ENCODE measurements at regions of chr14 and their contacts with region 1.

Region 1: GRCh38 chr14:94036313-94037050 is 10.3 kb downstream of the OTUB2 start:
- DNase-seq: peak; percentile 63 to 73 (median 69)
- H3K4me3 ChIP-seq: no peak overlapping the region
- H3K4me3 Mint-ChIP-seq: peak overlapping the region in 1 of 8 donors; percentile 16
- H3K27ac ChIP-seq: no peak overlapping the region
- H3K27ac Mint-ChIP-seq: peak overlapping the region in 1 of 7 donors; percentile 47
- H3K4me1 ChIP-seq: no peaks in the 10 kb centered on the region
- H3K4me1 Mint-ChIP-seq: peaks cover 5 to 7% (median 6%) of the 10 kb centered on the region in 4 donors
- H3K27me3 ChIP-seq: no peaks in the 10 kb centered on the region
- H3K27me3 Mint-ChIP-seq: no peaks in the 10 kb centered on the region

Region 2: GRCh38 chr14:92224358-92224954 is 1812.0 kb before region 1 on chr14:
- CTCF ChIA-PET with region 1: no interaction called
- POLR2A ChIA-PET with region 1: no interaction called
- intact Hi-C with region 1: no loop called
- DNase-seq: no peak
- H3K4me3 ChIP-seq: no peak overlapping the region
- H3K4me3 Mint-ChIP-seq: no peak overlapping the region
- H3K27ac ChIP-seq: no peak overlapping the region
- H3K27ac Mint-ChIP-seq: no peak overlapping the region
- H3K4me1 ChIP-seq: no peaks in the 10 kb centered on the region
- H3K4me1 Mint-ChIP-seq: peaks cover 0 to 2% (median 0%) of the 10 kb centered on the region in 4 donors
- H3K27me3 ChIP-seq: no peaks in the 10 kb centered on the region
- H3K27me3 Mint-ChIP-seq: peaks cover 1 to 3% of the 10 kb centered on the region in 2 donors

Region 3: GRCh38 chr14:93970549-93970946 is 65.9 kb before region 1 on chr14:
- CTCF ChIA-PET with region 1: interaction called, 15 read pairs
- POLR2A ChIA-PET with region 1: no interaction called
- intact Hi-C with region 1: no loop called
- DNase-seq: peak; percentile 69 to 78 (median 70)
- H3K4me3 ChIP-seq: peak overlapping the region; percentile 66 to 79
- H3K4me3 Mint-ChIP-seq: peak overlapping the region; percentile 86 to 94 (median 90)
- H3K27ac ChIP-seq: peak overlapping the region; percentile 41
- H3K27ac Mint-ChIP-seq: peak overlapping the region in 6 of 7 donors; percentile 74 to 93 (median 84)
- H3K4me1 ChIP-seq: peaks cover 56% of the 10 kb centered on the region
- H3K4me1 Mint-ChIP-seq: peaks cover 25 to 67% (median 45%) of the 10 kb centered on the region in 4 donors
- H3K27me3 ChIP-seq: no peaks in the 10 kb centered on the region
- H3K27me3 Mint-ChIP-seq: no peaks in the 10 kb centered on the region

Region 4: DNA sequence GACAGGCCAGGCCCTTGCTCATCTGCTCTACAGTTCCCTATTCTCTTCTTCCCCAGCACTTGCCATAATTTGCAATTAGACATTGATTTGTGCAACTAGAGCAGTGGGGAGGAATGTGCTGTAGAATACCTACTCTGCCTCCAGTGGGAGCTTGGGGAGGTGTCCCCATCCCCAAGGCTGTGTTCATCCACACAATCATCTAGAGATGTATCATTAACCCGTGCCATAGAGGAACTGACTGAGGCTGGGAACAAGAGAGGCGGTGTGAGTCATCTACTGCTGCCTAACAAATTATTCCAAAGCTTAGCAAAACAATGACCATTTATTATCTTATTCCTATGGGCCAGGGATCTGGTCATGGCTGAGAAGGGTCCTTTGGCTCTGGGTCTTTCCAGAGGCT is 15.5 kb before region 1 on chr14:
- CTCF ChIA-PET with region 1: interaction called, 48 read pairs
- POLR2A ChIA-PET with region 1: interaction called, 7 read pairs
- intact Hi-C with region 1: no loop called
- DNase-seq: no peak
- H3K4me3 ChIP-seq: no peak overlapping the region
- H3K4me3 Mint-ChIP-seq: no peak overlapping the region
- H3K27ac ChIP-seq: no peak overlapping the region
- H3K27ac Mint-ChIP-seq: peak overlapping the region in 2 of 7 donors; percentile 5 to 31
- H3K4me1 ChIP-seq: peaks cover 27% of the 10 kb centered on the region
- H3K4me1 Mint-ChIP-seq: peaks cover 19 to 39% (median 25%) of the 10 kb centered on the region in 4 donors
- H3K27me3 ChIP-seq: no peaks in the 10 kb centered on the region
- H3K27me3 Mint-ChIP-seq: no peaks in the 10 kb centered on the region

Region 5: DNA sequence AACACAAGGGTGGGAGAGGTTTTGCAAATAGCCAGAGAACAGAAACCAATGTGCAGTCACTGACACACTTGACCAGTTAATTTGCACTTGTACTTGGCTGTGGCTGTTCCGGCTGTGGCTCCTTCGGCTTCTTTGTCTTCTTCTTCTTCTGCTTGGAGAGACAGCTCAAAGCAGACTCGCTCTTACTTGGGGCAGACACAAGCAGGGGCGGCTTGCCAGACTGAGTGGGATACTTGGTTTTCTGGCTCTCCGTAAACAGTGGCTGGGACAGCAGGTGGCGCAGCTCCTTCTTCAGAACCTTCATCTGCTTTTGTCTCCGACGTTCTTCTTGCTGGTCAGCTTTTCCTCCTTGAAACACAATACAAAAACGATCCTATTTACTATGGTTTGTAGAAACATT is 14.6 kb after region 1 on chr14:
- CTCF ChIA-PET with region 1: interaction called, 23 read pairs
- POLR2A ChIA-PET with region 1: interaction called, 3 read pairs
- intact Hi-C with region 1: no loop called
- DNase-seq: no peak
- H3K4me3 ChIP-seq: no peak overlapping the region
- H3K4me3 Mint-ChIP-seq: no peak overlapping the region
- H3K27ac ChIP-seq: no peak overlapping the region
- H3K27ac Mint-ChIP-seq: peak overlapping the region in 5 of 7 donors; percentile 5 to 93 (median 78)
- H3K4me1 ChIP-seq: peaks cover under 1% of the 10 kb centered on the region
- H3K4me1 Mint-ChIP-seq: peaks cover 7 to 30% (median 17%) of the 10 kb centered on the region in 4 donors
- H3K27me3 ChIP-seq: no peaks in the 10 kb centered on the region
- H3K27me3 Mint-ChIP-seq: no peaks in the 10 kb centered on the region

Region 6: DNA sequence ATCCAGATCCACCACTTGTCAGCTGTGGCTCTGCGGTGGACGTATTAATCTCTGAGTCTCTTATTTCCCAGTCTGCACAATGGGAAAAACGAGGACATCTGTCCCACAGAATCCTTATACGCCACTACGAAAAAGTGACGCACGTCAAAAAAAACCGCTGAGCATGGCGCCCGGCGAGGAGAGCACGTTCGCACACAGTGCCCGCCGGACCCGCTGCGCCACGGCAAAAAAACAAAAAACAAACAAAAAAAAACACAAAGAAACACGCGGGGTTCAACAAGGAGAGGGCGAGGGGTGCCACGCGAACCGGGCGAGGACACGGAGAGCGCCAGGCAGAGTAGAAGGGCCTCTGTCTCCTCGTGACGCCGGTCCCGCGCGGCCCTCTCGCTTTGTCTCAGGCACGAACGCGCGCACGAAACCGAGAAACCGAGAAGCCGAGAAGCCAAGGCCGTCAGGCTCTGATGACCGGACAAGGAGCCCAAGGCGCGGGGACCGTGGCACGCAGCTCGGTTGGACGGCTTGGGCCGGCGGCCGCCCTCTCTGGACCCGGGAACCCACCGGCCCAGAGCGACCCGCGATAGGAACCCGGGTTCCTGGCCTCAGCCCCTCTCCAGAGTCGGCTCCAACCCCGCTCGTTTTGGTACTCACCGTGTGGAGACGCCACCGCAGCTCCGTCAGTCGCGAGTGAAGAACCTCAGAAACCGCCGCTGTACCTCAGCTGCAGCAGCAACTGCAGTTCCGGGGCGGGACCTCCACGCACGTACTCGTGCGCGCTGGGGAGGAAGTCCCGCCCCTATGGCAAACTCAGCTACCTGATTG is 44.2 kb after region 1 on chr14 and contains the start of gene DDX24:
- CTCF ChIA-PET with region 1: interaction called, 29 read pairs
- POLR2A ChIA-PET with region 1: interaction called, 11 read pairs
- intact Hi-C with region 1: no loop called
- DNase-seq: peak; percentile 96 to 97 (median 97)
- H3K4me3 ChIP-seq: peak within 1 kb of the TSS; percentile 92 to 98
- H3K4me3 Mint-ChIP-seq: peak within 1 kb of the TSS; percentile 99 to 100 (median 99)
- H3K27ac ChIP-seq: peak within 1 kb of the TSS; percentile 86
- H3K27ac Mint-ChIP-seq: peak within 1 kb of the TSS; percentile 98 to 100 (median 99)
- H3K4me1 ChIP-seq: peaks cover 51% of the 10 kb centered on the region
- H3K4me1 Mint-ChIP-seq: peaks cover 36 to 72% (median 46%) of the 10 kb centered on the region in 4 donors
- H3K27me3 ChIP-seq: no peaks in the 10 kb centered on the region
- H3K27me3 Mint-ChIP-seq: no peaks in the 10 kb centered on the region
- total RNA-seq, gene DDX24: 313 to 322 TPM

Region 7: DNA sequence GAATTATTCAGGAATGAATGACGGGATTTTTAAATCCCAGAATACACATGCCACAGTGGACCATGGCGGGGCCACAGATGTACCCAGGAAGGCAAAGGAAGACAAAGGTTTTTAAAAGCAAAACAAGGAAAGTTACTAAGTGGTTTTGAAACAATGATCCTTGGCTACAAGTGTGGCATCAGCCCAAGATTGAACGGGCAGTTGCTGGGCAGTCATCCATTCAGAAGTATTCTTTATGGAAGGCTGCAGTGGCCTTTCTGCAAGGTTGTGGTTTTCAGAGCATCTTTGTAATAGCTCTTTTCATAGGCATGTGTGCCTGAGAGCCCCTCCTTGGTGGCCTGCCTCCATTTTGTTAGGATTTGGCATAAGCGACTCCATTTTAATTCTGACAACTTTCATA is 60.6 kb after region 1 on chr14:
- CTCF ChIA-PET with region 1: no interaction called
- POLR2A ChIA-PET with region 1: no interaction called
- intact Hi-C with region 1: no loop called
- DNase-seq: no peak
- H3K4me3 ChIP-seq: no peak overlapping the region
- H3K4me3 Mint-ChIP-seq: no peak overlapping the region
- H3K27ac ChIP-seq: no peak overlapping the region
- H3K27ac Mint-ChIP-seq: no peak overlapping the region
- H3K4me1 ChIP-seq: no peaks in the 10 kb centered on the region
- H3K4me1 Mint-ChIP-seq: no peaks in the 10 kb centered on the region
- H3K27me3 ChIP-seq: no peaks in the 10 kb centered on the region
- H3K27me3 Mint-ChIP-seq: no peaks in the 10 kb centered on the region

Region 8: GRCh38 chr14:94136575-94137331 is 100.3 kb after region 1 on chr14:
- CTCF ChIA-PET with region 1: interaction called, 142 read pairs
- POLR2A ChIA-PET with region 1: interaction called, 8 read pairs
- intact Hi-C with region 1: loop called (anchors 1 kb)
- DNase-seq: peak; percentile 74 to 80 (median 77)
- H3K4me3 ChIP-seq: no peak overlapping the region
- H3K4me3 Mint-ChIP-seq: no peak overlapping the region
- H3K27ac ChIP-seq: no peak overlapping the region
- H3K27ac Mint-ChIP-seq: no peak overlapping the region
- H3K4me1 ChIP-seq: no peaks in the 10 kb centered on the region
- H3K4me1 Mint-ChIP-seq: peaks cover 0 to 10% (median 1%) of the 10 kb centered on the region in 4 donors
- H3K27me3 ChIP-seq: no peaks in the 10 kb centered on the region
- H3K27me3 Mint-ChIP-seq: peaks cover 1 to 3% of the 10 kb centered on the region in 2 donors

Region 9: DNA sequence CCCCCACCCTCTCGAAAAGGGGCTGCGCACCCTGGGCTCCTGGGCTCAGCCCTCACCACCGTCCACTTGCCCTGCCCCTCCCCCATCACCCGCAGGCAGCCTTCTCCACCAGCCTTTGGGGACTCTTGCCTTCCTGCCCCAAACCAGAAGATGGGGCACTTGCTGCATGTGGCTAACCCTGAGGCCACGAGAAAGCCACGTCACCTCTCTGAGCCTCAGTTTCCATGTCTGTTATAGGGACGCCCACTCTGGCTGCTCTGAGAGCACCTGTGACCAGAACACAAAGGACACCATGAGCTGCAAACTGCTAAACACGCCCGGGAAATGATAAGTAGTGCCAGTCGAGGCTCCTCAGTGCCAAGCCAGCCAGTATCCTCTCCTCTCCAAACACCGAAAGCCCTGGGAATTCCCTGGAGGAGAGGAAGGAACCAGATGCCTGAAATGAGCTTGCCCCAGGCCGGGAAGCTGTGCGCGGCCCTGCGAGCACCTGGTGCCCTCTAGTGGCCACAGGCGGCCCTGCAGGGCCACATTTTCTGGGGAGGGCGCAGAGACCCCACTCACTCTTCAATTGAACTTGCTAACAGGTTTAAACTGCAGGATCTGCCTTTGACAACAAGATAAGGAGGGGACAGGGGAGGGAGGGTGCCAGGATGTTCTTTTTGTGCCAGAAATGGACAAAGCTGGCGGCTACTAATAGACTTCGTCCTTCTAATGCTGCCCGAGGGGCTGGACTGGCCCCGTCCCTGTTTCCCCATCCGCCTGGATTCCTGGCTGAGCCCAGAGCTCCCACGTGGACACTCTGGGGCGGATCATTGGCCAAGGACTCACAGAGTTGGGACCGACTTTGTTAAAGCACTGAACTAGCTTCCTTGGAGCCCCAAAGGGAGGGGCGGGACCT is 449.7 kb after region 1 on chr14:
- CTCF ChIA-PET with region 1: interaction called, 7 read pairs
- POLR2A ChIA-PET with region 1: no interaction called
- intact Hi-C with region 1: loop called (anchors 1 kb)
- DNase-seq: peak in 4 of 5 donors; percentile 17 to 33 (median 26)
- H3K4me3 ChIP-seq: no peak overlapping the region
- H3K4me3 Mint-ChIP-seq: no peak overlapping the region
- H3K27ac ChIP-seq: no peak overlapping the region
- H3K27ac Mint-ChIP-seq: no peak overlapping the region
- H3K4me1 ChIP-seq: no peaks in the 10 kb centered on the region
- H3K4me1 Mint-ChIP-seq: peaks cover 0 to 5% (median 2%) of the 10 kb centered on the region in 4 donors
- H3K27me3 ChIP-seq: no peaks in the 10 kb centered on the region
- H3K27me3 Mint-ChIP-seq: peaks cover 16 to 19% of the 10 kb centered on the region in 2 donors

Region 10: GRCh38 chr14:94748667-94749347 is 712.3 kb after region 1 on chr14:
- CTCF ChIA-PET with region 1: no interaction called
- POLR2A ChIA-PET with region 1: no interaction called
- intact Hi-C with region 1: no loop called
- DNase-seq: no peak
- H3K4me3 ChIP-seq: no peak overlapping the region
- H3K4me3 Mint-ChIP-seq: no peak overlapping the region
- H3K27ac ChIP-seq: no peak overlapping the region
- H3K27ac Mint-ChIP-seq: no peak overlapping the region
- H3K4me1 ChIP-seq: no peaks in the 10 kb centered on the region
- H3K4me1 Mint-ChIP-seq: peaks cover 0 to 1% (median 0%) of the 10 kb centered on the region in 4 donors
- H3K27me3 ChIP-seq: no peaks in the 10 kb centered on the region
- H3K27me3 Mint-ChIP-seq: peaks cover 3 to 9% of the 10 kb centered on the region in 2 donors

Measured in CD4-positive, alpha-beta memory T cell (primary cell).